ENCODE measurements at regions of chr1 and their contacts with region 1.

Region 1: GRCh38 chr1:36223993-36224536 is at the start of gene THRAP3:
- DNase-seq: peak; percentile 99
- ATAC-seq: peak; percentile 89
- H3K4me3 Mint-ChIP-seq: peak within 1 kb of the TSS; percentile 97
- H3K27ac Mint-ChIP-seq: peak within 1 kb of the TSS; percentile 100
- H3K4me1 Mint-ChIP-seq: peaks cover 26% of the 10 kb centered on the region
- H3K27me3 Mint-ChIP-seq: no peaks in the 10 kb centered on the region
- total RNA-seq, gene THRAP3: 125 to 130 TPM

Region 2: GRCh38 chr1:36149237-36149972 is 74.7 kb before region 1 on chr1 and contains the start of gene TRAPPC3:
- POLR2A ChIA-PET with region 1: interaction called, 33 read pairs
- DNase-seq: peak; percentile 98
- ATAC-seq: peak; percentile 93
- H3K4me3 Mint-ChIP-seq: peak within 1 kb of the TSS; percentile 98
- H3K27ac Mint-ChIP-seq: peak within 1 kb of the TSS; percentile 100
- H3K4me1 Mint-ChIP-seq: peaks cover 46% of the 10 kb centered on the region
- H3K27me3 Mint-ChIP-seq: no peaks in the 10 kb centered on the region
- total RNA-seq, gene TRAPPC3: 51.7 to 52.5 TPM

Region 3: GRCh38 chr1:36155408-36156328 is 68.4 kb before region 1 on chr1 and contains the start of gene MAP7D1:
- POLR2A ChIA-PET with region 1: interaction called, 33 read pairs
- DNase-seq: peak; percentile 92
- ATAC-seq: peak; percentile 67
- H3K4me3 Mint-ChIP-seq: peak within 1 kb of the TSS; percentile 88
- H3K27ac Mint-ChIP-seq: peak within 1 kb of the TSS; percentile 92
- H3K4me1 Mint-ChIP-seq: peaks cover 58% of the 10 kb centered on the region
- H3K27me3 Mint-ChIP-seq: no peaks in the 10 kb centered on the region
- total RNA-seq, gene MAP7D1: 234 to 237 TPM

Region 4: DNA sequence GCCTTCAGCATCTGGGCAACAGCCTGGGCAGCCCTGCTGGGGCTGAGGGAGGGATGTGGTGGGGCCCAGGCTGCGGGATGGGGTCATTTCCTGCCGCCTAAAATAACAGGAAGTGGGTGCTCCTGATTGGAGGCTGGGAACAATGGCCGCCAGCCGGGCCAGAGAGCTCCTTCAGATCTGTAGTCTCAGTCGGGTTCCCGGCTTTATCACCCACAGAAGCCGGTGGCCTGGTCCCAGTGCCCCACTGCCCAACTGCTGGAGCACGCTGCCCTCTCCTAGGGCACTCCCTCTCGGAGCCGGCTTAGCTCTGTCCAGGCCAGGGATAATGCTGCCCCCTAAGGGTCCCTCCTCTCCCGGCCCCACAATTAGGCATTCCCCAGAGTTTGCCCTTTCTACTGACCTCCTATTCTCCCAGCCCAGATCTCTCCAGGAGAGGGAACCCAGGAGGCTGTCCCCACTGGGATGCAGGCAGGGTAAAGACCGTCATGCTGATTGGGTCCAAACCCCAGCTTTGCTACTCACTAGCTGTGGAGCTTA is 63.0 kb before region 1 on chr1:
- POLR2A ChIA-PET with region 1: interaction called, 28 read pairs
- DNase-seq: peak; percentile 77
- ATAC-seq: peak; percentile 43
- H3K4me3 Mint-ChIP-seq: peak overlapping the region; percentile 91
- H3K27ac Mint-ChIP-seq: peak overlapping the region; percentile 97
- H3K4me1 Mint-ChIP-seq: peaks cover 65% of the 10 kb centered on the region
- H3K27me3 Mint-ChIP-seq: no peaks in the 10 kb centered on the region